GM12878 (cell line): ENCODE measurements at regions of chr15 and their contacts with region 1.

Region 1: DNA sequence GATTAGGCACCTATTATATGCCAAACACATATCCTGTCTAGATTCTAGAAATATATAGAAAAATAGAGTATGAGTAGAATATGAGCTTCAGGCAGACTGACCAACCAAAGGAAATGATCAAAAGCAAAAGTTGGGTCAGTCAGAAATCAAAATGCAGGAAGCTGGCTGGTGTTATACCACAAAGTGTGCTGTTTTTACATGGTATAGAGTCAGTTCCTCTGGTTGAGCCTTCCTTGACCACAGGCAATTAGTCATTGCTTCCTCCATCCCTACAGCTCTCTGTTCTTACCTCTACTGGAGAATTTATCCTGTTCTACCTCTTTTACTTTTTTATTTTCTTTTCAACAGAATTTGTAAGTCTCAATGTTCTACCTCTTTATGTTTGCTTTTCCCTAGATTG is 149.8 kb downstream of the TMCO5A start:
- DNase-seq: peak; percentile 85
- ATAC-seq: peak; percentile 85
- H3K4me3 ChIP-seq: no peak overlapping the region
- H3K27ac ChIP-seq: no peak overlapping the region
- H3K4me1 ChIP-seq: peaks cover 33% of the 10 kb centered on the region
- H3K27me3 ChIP-seq: no peaks in the 10 kb centered on the region
- CTCF ChIP-seq: no peak
- EP300 ChIP-seq: peak in 1 of 2 experiments; percentile 77; a peak in 1 of 4 replicates
- POLR2A ChIP-seq: no peak
- RAD21 ChIP-seq: no peak

Region 2: GRCh38 chr15:38021259-38021658 is 63.0 kb before region 1 on chr15:
- CTCF ChIA-PET with region 1: interaction called, 4 read pairs
- POLR2A ChIA-PET with region 1: interaction called, 4 read pairs
- RAD21 ChIA-PET with region 1: no interaction called
- SMC1A ChIA-PET with region 1: interaction called, 12 read pairs
- in situ Hi-C with region 1: no loop called
- intact Hi-C with region 1: no loop called
- DNase-seq: no peak
- ATAC-seq: peak; percentile 73
- H3K4me3 ChIP-seq: no peak overlapping the region
- H3K27ac ChIP-seq: no peak overlapping the region
- H3K4me1 ChIP-seq: no peaks in the 10 kb centered on the region
- H3K27me3 ChIP-seq: no peaks in the 10 kb centered on the region
- CTCF ChIP-seq: no peak
- EP300 ChIP-seq: peak; percentile 51 to 64; a peak in 3 of 4 replicates
- POLR2A ChIP-seq: no peak
- RAD21 ChIP-seq: no peak

Region 3: GRCh38 chr15:38041576-38041975 is 42.7 kb before region 1 on chr15:
- CTCF ChIA-PET with region 1: no interaction called
- POLR2A ChIA-PET with region 1: interaction called, 7 read pairs
- RAD21 ChIA-PET with region 1: interaction called, 7 read pairs
- SMC1A ChIA-PET with region 1: interaction called, 11 read pairs
- in situ Hi-C with region 1: no loop called
- intact Hi-C with region 1: no loop called
- DNase-seq: no peak
- ATAC-seq: peak; percentile 35; the same call in 2 of the 3 replicates
- H3K4me3 ChIP-seq: no peak overlapping the region
- H3K27ac ChIP-seq: no peak overlapping the region
- H3K4me1 ChIP-seq: peaks cover 7% of the 10 kb centered on the region
- H3K27me3 ChIP-seq: no peaks in the 10 kb centered on the region
- CTCF ChIP-seq: no peak
- EP300 ChIP-seq: no peak
- POLR2A ChIP-seq: no peak
- RAD21 ChIP-seq: no peak

Region 4: GRCh38 chr15:38059665-38060064 is 24.6 kb before region 1 on chr15:
- CTCF ChIA-PET with region 1: interaction called, 5 read pairs
- POLR2A ChIA-PET with region 1: interaction called, 7 read pairs
- RAD21 ChIA-PET with region 1: interaction called, 6 read pairs
- SMC1A ChIA-PET with region 1: interaction called, 32 read pairs
- in situ Hi-C with region 1: no loop called
- intact Hi-C with region 1: no loop called
- DNase-seq: no peak
- ATAC-seq: peak; percentile 44
- H3K4me3 ChIP-seq: no peak overlapping the region
- H3K27ac ChIP-seq: no peak overlapping the region
- H3K4me1 ChIP-seq: peaks cover 4% of the 10 kb centered on the region; the same call in 1 of the 2 replicates
- H3K27me3 ChIP-seq: no peaks in the 10 kb centered on the region
- CTCF ChIP-seq: no peak
- EP300 ChIP-seq: no peak
- POLR2A ChIP-seq: no peak
- RAD21 ChIP-seq: no peak

Region 5: DNA sequence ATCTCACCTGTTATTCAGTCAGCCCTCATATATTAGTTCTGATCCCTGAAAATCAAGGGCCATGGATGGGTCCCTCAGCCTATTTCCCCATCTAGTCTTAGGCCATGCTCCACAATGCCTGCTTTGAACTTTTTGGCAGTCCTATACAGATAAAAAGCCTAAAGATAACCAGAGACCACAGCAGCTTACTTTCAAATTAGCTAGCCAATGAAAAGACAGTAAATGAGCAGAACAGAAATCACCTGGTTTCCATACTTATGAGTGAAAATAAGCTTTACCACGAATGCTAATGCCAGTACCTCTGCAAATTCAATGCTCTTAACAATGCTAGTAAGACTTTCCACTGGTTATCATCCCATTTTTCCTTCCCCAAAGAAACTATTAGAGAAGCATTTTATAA is 26.8 kb after region 1 on chr15:
- CTCF ChIA-PET with region 1: interaction called, 5 read pairs
- POLR2A ChIA-PET with region 1: interaction called, 3 read pairs
- RAD21 ChIA-PET with region 1: interaction called, 3 read pairs
- SMC1A ChIA-PET with region 1: interaction called, 18 read pairs
- in situ Hi-C with region 1: no loop called
- intact Hi-C with region 1: no loop called
- DNase-seq: no peak
- ATAC-seq: peak; percentile 61
- H3K4me3 ChIP-seq: 0 out of 2 replicates have a peak overlapping the region, but pooled peaks have one; percentile 27
- H3K27ac ChIP-seq: no peak overlapping the region
- H3K4me1 ChIP-seq: no peaks in the 10 kb centered on the region
- H3K27me3 ChIP-seq: no peaks in the 10 kb centered on the region
- CTCF ChIP-seq: no peak
- EP300 ChIP-seq: no peak
- POLR2A ChIP-seq: no peak
- RAD21 ChIP-seq: no peak

Region 6: GRCh38 chr15:38129531-38130204 is 45.4 kb after region 1 on chr15:
- CTCF ChIA-PET with region 1: interaction called, 7 read pairs
- POLR2A ChIA-PET with region 1: interaction called, 8 read pairs
- RAD21 ChIA-PET with region 1: interaction called, 39 read pairs
- SMC1A ChIA-PET with region 1: interaction called, 37 read pairs
- in situ Hi-C with region 1: no loop called
- intact Hi-C with region 1: loop called (anchors 1 kb)
- DNase-seq: peak; percentile 39
- ATAC-seq: peak; percentile 81
- H3K4me3 ChIP-seq: peak overlapping the region; percentile 38; the same call in 1 of the 2 replicates
- H3K27ac ChIP-seq: peak overlapping the region; percentile 20; the same call in 1 of the 2 replicates
- H3K4me1 ChIP-seq: peaks cover 17% of the 10 kb centered on the region
- H3K27me3 ChIP-seq: no peaks in the 10 kb centered on the region
- CTCF ChIP-seq: no peak
- EP300 ChIP-seq: peak in 1 of 2 experiments; percentile 32; a peak in 1 of 4 replicates
- POLR2A ChIP-seq: no peak
- RAD21 ChIP-seq: no peak

Region 7: GRCh38 chr15:38211811-38212210 is 127.5 kb after region 1 on chr15:
- CTCF ChIA-PET with region 1: no interaction called
- POLR2A ChIA-PET with region 1: no interaction called
- RAD21 ChIA-PET with region 1: no interaction called
- SMC1A ChIA-PET with region 1: no interaction called
- in situ Hi-C with region 1: no loop called
- intact Hi-C with region 1: no loop called
- DNase-seq: no peak
- ATAC-seq: no peak
- H3K4me3 ChIP-seq: no peak overlapping the region
- H3K27ac ChIP-seq: no peak overlapping the region
- H3K4me1 ChIP-seq: no peaks in the 10 kb centered on the region
- H3K27me3 ChIP-seq: no peaks in the 10 kb centered on the region
- CTCF ChIP-seq: no peak
- EP300 ChIP-seq: no peak
- POLR2A ChIP-seq: no peak
- RAD21 ChIP-seq: no peak

Region 8: DNA sequence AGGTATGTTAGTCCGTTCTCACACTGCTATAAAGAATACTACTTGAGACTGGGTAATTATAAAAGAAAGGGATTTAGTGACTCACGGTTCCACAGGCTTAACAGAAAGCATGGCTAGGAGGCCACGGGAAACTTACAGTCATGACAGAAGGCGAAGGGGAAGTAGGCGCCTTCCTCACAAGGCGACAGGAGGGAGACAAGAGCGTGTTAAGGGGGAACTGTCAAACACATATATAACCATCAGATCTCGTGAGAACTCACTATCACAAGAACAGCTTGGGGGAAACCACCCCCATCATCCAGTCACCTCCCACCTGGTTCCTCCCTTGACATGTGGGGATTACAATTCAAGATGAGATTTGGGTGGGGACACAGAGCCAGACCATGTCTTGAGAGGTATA is 198.7 kb after region 1 on chr15:
- CTCF ChIA-PET with region 1: no interaction called
- POLR2A ChIA-PET with region 1: no interaction called
- RAD21 ChIA-PET with region 1: no interaction called
- SMC1A ChIA-PET with region 1: no interaction called
- in situ Hi-C with region 1: no loop called
- intact Hi-C with region 1: no loop called
- DNase-seq: no peak
- ATAC-seq: no peak
- H3K4me3 ChIP-seq: no peak overlapping the region
- H3K27ac ChIP-seq: no peak overlapping the region
- H3K4me1 ChIP-seq: no peaks in the 10 kb centered on the region
- H3K27me3 ChIP-seq: no peaks in the 10 kb centered on the region
- CTCF ChIP-seq: no peak
- EP300 ChIP-seq: no peak
- POLR2A ChIP-seq: no peak
- RAD21 ChIP-seq: no peak

Region 9: GRCh38 chr15:38294126-38294525 is 209.8 kb after region 1 on chr15:
- CTCF ChIA-PET with region 1: no interaction called
- POLR2A ChIA-PET with region 1: no interaction called
- RAD21 ChIA-PET with region 1: no interaction called
- SMC1A ChIA-PET with region 1: no interaction called
- in situ Hi-C with region 1: no loop called
- intact Hi-C with region 1: no loop called
- DNase-seq: no peak
- ATAC-seq: no peak
- H3K4me3 ChIP-seq: no peak overlapping the region
- H3K27ac ChIP-seq: no peak overlapping the region
- H3K4me1 ChIP-seq: no peaks in the 10 kb centered on the region
- H3K27me3 ChIP-seq: no peaks in the 10 kb centered on the region
- CTCF ChIP-seq: no peak
- EP300 ChIP-seq: no peak
- POLR2A ChIP-seq: no peak
- RAD21 ChIP-seq: no peak